ENCODE measurements at regions of chr16 and their contacts with region 1.

Region 1: GRCh38 chr16:30957456-30958174 is at the start of gene SETD1A:
- DNase-seq: peak; percentile 99
- H3K4me3 ChIP-seq: peak within 1 kb of the TSS; percentile 75
- H3K27ac ChIP-seq: peak within 1 kb of the TSS; percentile 90
- H3K4me1 ChIP-seq: peaks cover 35% of the 10 kb centered on the region
- CTCF ChIP-seq: no peak
- total RNA-seq, gene SETD1A: 8.6 and 9.0 TPM in 2 replicates

Region 2: DNA sequence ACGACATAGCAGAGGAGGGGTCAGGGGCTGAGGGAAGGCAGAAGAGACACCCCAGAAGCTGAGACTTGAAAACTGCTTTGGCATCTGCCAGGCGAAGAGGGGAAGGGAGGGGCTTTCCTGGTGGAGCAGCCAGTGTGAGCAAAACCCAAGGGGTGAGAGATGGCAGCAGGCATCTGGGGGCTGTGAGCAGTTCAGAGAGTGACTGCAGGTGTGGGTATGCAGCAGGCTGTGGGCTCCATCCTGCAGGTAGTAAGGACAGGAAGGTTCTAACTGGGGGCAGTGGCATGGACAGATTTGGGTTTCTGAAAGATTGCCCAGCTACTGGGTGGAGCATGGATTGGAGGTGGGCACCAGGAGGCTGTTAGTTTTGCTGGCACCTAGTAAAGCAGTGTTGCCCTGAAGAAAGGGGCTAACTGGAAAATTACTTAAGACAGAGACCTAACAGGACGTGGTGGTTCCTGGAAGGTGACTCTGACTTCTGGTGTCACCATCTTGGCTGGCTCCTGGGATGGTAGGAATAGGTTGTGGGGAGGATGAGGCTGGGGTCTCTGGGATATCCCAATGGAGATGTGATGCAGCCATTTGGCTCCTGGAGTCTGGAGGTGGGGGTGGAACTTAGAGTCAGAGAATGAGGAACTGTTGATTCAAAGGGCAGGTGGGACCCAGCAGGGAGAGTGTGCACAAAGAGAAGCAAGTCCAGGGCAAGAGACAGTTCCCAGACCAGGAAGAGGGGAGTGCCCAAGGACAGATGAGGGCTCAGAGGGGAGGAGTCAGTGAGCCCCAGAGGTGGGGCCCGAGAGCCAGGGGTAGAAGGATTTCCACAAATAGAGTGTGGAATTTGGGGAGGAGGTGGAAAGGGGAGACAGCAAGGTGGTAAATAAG is 74.9 kb before region 1 on chr16:
- CTCF ChIA-PET with region 1: no interaction called
- POLR2A ChIA-PET with region 1: no interaction called
- intact Hi-C with region 1: no loop called
- DNase-seq: no peak
- H3K4me3 ChIP-seq: no peak overlapping the region
- H3K27ac ChIP-seq: no peak overlapping the region
- H3K4me1 ChIP-seq: peaks cover 9% of the 10 kb centered on the region
- CTCF ChIP-seq: no peak

Region 3: DNA sequence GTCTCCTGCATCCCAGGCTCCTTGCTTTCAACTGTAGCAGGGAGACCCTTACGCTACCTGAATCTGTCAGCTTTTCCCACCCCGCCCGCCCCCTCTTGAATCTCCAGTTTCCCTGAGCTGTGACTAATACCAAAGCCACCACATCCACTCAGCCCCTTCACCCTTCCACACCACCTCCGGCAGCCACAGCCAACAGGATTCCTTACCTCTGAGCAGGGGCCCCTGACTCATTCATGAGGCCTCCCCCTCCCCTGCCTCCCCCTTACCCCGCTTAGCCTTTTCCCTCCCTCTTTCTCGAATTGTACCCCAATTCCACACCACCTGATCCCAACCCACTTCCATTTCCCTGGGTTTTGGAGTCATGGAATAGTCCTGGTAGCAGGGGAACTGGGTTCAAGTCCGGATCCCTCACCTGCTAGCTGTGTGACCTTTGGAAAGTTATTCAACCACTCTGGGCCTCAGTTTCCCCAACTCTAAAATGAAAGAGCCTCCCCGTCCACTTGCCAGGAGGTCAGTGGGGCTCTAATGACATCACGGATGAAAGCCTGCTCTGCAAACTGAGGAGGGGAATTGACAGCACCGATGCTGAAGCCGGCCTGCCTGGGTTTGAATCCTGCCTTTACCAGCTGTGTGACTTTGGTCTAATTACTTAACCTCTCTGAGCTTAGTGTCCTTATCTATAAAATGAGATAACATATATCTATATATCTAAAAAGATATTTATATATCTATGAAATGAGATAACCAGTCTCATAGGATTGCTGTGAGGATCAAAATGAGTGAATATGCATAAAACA is 50.7 kb after region 1 on chr16:
- CTCF ChIA-PET with region 1: no interaction called
- POLR2A ChIA-PET with region 1: interaction called, 11 read pairs
- intact Hi-C with region 1: no loop called
- DNase-seq: no peak
- H3K4me3 ChIP-seq: no peak overlapping the region
- H3K27ac ChIP-seq: no peak overlapping the region
- H3K4me1 ChIP-seq: no peaks in the 10 kb centered on the region
- CTCF ChIP-seq: no peak